T-cell (primary cell): ENCODE measurements at regions of chrX and their contacts with region 1.

Region 1: GRCh38 chrX:40651620-40652223 is 4.4 kb upstream of the CXorf38 start:
- DNase-seq: peak; percentile 38 to 84 (median 64)
- ATAC-seq: no peak
- H3K4me3 ChIP-seq: no peak overlapping the region
- H3K4me3 Mint-ChIP-seq: no peak overlapping the region
- H3K27ac ChIP-seq: no peak overlapping the region
- H3K27ac Mint-ChIP-seq: peak overlapping the region in 1 of 2 donors; percentile 3
- H3K4me1 ChIP-seq: peaks cover 0 to 5% of the 10 kb centered on the region in 2 experiments
- H3K4me1 Mint-ChIP-seq: peaks cover 9 to 17% (median 12%) of the 10 kb centered on the region in 3 donors
- H3K27me3 ChIP-seq: no peaks in the 10 kb centered on the region
- H3K27me3 Mint-ChIP-seq: no peaks in the 10 kb centered on the region

Region 2: DNA sequence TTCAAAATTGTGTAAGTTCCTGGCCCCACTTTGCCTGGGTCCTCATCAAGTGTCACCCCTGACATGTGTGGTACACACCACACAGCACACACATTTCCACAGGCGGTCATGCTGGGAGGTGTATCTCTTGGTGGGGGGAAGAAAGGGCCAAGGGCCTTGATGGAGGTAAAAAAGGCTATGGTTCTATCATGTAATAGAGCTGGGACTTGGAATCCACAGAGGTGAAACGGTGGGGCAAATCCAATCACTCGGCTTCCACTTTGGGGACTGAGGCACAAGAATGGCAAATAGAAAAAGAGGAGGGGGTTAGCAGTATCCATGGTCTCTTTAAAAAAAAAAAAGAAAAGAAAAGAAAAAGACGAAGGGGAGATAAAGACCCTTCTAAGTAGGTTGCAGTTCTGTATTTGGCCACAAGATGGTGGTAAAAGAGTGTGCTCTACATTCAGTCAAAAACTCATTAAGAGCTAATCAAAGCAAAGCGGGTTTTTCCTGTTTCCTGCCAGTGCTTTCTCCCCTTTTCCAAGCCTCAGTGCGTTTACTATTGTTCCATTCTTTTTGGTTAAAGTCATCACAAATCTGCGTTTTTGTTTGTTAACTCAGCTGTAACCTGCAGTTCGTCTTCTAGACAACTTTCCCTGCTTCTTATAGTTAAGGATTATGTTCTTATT is 107.9 kb before region 1 on chrX:
- CTCF ChIA-PET with region 1: interaction called, 5 to 14 read pairs
- POLR2A ChIA-PET with region 1: no interaction called
- DNase-seq: peak in 3 of 35 experiments; percentile 9 to 69 (median 13)
- ATAC-seq: no peak
- H3K4me3 ChIP-seq: no peak overlapping the region
- H3K4me3 Mint-ChIP-seq: no peak overlapping the region
- H3K27ac ChIP-seq: no peak overlapping the region
- H3K27ac Mint-ChIP-seq: no peak overlapping the region
- H3K4me1 ChIP-seq: peaks cover 0 to 13% of the 10 kb centered on the region in 2 experiments
- H3K4me1 Mint-ChIP-seq: peaks cover 16 to 25% (median 19%) of the 10 kb centered on the region in 3 donors
- H3K27me3 ChIP-seq: no peaks in the 10 kb centered on the region
- H3K27me3 Mint-ChIP-seq: peaks cover 0 to 16% of the 10 kb centered on the region in 2 donors

Region 3: DNA sequence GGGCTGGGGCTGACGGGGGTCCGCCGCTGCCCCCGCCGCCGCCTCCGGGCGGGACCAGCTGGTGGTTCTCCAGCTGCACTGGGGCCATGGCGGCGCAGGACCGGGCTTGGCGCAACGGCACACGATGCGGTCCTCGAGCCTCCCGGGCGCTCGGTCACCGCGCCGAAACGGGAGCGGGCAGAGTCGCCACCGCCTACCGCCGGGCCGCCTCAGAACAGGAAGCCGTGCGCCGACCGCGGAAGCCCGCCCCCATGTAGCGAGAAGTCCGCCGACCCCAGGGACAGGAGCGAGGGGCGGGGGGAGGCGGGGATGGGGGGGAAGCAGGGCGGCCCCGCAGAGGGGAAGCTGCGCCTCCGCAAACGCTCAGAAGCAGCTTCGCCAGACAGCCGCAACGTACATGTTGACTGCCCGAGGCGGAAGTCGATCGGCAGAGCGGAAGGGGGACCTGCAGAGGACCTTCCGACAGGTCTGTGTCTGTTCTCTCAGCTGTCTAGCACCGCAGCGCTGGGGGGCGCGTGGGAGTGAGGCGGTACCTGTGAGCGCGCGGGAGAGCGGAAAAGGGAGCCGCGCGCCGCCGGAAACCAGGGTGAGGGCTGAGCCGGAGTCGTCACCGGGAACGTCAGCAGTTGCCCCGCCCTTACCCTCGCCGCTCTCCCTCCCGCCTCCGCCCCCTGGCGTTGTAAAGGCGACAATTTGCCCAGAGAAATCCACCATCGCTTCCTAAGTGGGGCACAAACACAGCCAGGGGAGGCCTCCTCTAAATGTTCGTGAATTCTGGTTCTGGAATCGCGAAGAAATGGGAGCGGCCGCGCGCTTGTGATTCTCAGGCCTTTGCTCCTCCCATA is 83.8 kb after region 1 on chrX and contains the start of gene MED14:
- CTCF ChIA-PET with region 1: interaction called, 4 to 17 read pairs
- POLR2A ChIA-PET with region 1: interaction called in 1 of 2 experiments, 7 read pairs
- DNase-seq: peak; percentile 83 to 98 (median 92)
- ATAC-seq: peak; percentile 90 to 92 (median 91)
- H3K4me3 ChIP-seq: peak within 1 kb of the TSS; percentile 78 to 81
- H3K4me3 Mint-ChIP-seq: peak within 1 kb of the TSS; percentile 89 to 94 (median 92)
- H3K27ac ChIP-seq: peak within 1 kb of the TSS; percentile 96
- H3K27ac Mint-ChIP-seq: peak within 1 kb of the TSS; percentile 96 to 97
- H3K4me1 ChIP-seq: peaks cover 13 to 22% of the 10 kb centered on the region in 2 experiments
- H3K4me1 Mint-ChIP-seq: peaks cover 53 to 69% (median 67%) of the 10 kb centered on the region in 3 donors
- H3K27me3 ChIP-seq: no peaks in the 10 kb centered on the region
- H3K27me3 Mint-ChIP-seq: no peaks in the 10 kb centered on the region
- total RNA-seq, gene MED14: 30.7 to 56.0 (median 43.2) TPM

Region 4: DNA sequence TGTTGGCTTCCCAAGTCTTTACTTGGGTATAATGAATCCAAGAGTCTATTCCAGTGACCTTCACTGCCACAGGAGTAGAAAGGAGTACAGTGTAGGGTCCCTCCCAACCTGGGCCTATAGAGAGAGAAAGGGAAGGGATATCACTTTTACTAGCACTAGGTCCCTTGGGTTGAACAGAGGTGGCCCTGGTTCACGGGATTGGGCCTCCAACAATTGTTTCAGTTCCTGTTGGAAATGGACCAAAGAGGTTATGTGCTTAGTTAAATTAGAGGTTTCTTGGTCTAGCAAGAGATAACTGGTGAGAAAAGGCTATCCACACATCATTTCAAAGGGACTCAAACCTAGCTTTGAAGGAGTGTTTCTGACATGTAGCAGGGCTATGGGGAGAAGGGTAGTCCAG is 140.7 kb after region 1 on chrX:
- CTCF ChIA-PET with region 1: interaction called, 12 to 38 read pairs
- POLR2A ChIA-PET with region 1: interaction called in 1 of 2 experiments, 3 read pairs
- DNase-seq: no peak
- ATAC-seq: no peak
- H3K4me3 ChIP-seq: no peak overlapping the region
- H3K4me3 Mint-ChIP-seq: no peak overlapping the region
- H3K27ac ChIP-seq: no peak overlapping the region
- H3K27ac Mint-ChIP-seq: no peak overlapping the region
- H3K4me1 ChIP-seq: peaks cover 0 to 3% of the 10 kb centered on the region in 2 experiments
- H3K4me1 Mint-ChIP-seq: peaks cover 0 to 4% (median 3%) of the 10 kb centered on the region in 3 donors
- H3K27me3 ChIP-seq: no peaks in the 10 kb centered on the region
- H3K27me3 Mint-ChIP-seq: peaks cover 5 to 15% of the 10 kb centered on the region in 2 donors